Sigmoid colon (tissue), 7 donors: ENCODE measurements at regions of chr4 and their contacts with region 1.

Region 1: GRCh38 chr4:87422104-87423052 is at the start of gene NUDT9:
- DNase-seq: peak; percentile 97
- H3K4me3 ChIP-seq: peak within 1 kb of the TSS; percentile 67 to 91 (median 74)
- H3K27ac ChIP-seq: peak within 1 kb of the TSS; percentile 85 to 95 (median 91)
- H3K4me1 ChIP-seq: peaks cover 0 to 31% (median 27%) of the 10 kb centered on the region in 4 donors
- H3K27me3 ChIP-seq: no peaks in the 10 kb centered on the region
- CTCF ChIP-seq: no peak
- EP300 ChIP-seq: peak in 1 of 4 donors; percentile 82
- POLR2A ChIP-seq: peak; percentile 83 to 86
- total RNA-seq, gene NUDT9: 12.4 to 25.2 (median 22.7) TPM

Region 2: DNA sequence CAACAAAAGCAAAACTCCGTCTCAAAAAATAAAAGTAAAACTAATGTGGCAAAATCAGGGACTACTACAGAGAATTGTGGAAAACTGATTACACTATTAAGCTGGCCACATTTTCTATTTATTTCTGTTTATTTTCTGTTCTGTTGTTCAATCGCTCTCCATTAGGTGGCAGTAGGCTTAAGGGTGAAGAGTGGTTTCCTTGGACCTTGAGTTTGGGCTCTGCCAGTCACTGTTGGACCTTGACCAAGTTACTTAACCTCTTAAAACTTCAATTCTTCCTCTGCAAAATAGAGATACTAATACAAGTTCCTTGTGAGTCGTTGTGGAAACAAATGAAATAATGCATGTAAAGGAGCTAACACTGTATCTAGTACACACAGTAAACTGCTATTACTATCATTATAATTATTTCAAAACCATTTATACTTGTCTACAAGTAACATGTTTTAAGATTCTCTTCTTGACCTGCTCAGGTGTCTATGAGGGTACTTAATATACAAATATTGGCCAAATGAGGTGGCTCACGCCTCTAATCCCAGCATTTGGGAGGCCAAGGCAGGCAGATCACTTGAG is 46.6 kb before region 1 on chr4:
- intact Hi-C with region 1: loop called (anchors 10 kb)
- DNase-seq: peak; percentile 76
- H3K4me3 ChIP-seq: no peak overlapping the region
- H3K27ac ChIP-seq: peak overlapping the region in 2 of 4 donors; percentile 8 to 58
- H3K4me1 ChIP-seq: peaks cover 0 to 8% (median 5%) of the 10 kb centered on the region in 4 donors
- H3K27me3 ChIP-seq: no peaks in the 10 kb centered on the region
- CTCF ChIP-seq: peak; percentile 67 to 79 (median 75)
- EP300 ChIP-seq: no peak
- POLR2A ChIP-seq: no peak

Region 3: GRCh38 chr4:87390891-87391575 is 31.3 kb before region 1 on chr4 and contains the start of gene HSD17B11:
- intact Hi-C with region 1: loop called (anchors 1 kb)
- DNase-seq: peak; percentile 97
- H3K4me3 ChIP-seq: peak within 1 kb of the TSS; percentile 41 to 73 (median 56)
- H3K27ac ChIP-seq: peak within 1 kb of the TSS; percentile 83 to 92 (median 89)
- H3K4me1 ChIP-seq: peaks cover 0 to 48% (median 25%) of the 10 kb centered on the region in 4 donors
- H3K27me3 ChIP-seq: no peaks in the 10 kb centered on the region
- CTCF ChIP-seq: peak in 1 of 4 experiments; percentile 24
- EP300 ChIP-seq: no peak
- POLR2A ChIP-seq: peak; percentile 69 to 90
- total RNA-seq, gene HSD17B11: 57.3 to 97.6 (median 70.3) TPM

Region 4: DNA sequence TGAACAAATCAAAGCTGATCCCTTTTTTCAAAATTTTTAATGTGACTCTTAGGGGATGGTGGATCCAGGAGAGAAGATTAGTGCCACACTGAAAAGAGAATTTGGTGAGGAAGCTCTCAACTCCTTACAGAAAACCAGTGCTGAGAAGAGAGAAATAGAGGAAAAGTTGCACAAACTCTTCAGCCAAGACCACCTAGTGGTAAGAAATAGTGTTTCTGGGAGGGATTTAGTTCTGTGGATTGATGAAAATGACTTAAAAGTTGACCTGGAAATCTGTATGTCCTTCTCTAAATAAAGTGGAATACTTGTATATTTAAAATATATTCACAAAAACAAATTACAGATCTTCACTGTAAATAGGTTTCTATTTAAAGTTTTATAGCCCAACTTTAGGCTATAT is 29.2 kb after region 1 on chr4:
- intact Hi-C with region 1: no loop called
- DNase-seq: no peak
- H3K4me3 ChIP-seq: no peak overlapping the region
- H3K27ac ChIP-seq: no peak overlapping the region
- H3K4me1 ChIP-seq: no peaks in the 10 kb centered on the region
- H3K27me3 ChIP-seq: no peaks in the 10 kb centered on the region
- CTCF ChIP-seq: no peak
- EP300 ChIP-seq: no peak
- POLR2A ChIP-seq: no peak